ENCODE measurements at regions of chr7 and their contacts with region 1.

Region 1: DNA sequence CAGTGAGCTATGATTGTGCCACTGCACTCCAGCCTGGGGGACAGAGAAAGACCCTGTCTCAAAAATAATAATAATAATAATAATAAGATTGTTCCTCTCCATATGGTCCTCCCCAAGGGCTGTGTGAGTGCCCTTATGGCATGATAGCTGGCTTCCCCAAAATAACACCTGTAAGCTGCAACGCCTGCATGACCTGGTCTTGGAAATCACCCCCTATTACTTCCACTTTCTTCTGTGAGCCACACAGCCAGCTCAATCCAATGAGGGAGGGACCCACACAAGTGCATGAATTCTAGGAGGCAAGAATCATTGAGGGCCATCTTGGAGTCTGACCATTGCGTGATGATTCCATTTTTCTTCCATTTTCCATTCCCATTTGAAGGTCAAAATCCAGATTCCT is 82.7 kb upstream of the CALN1 start:
- DNase-seq: no peak
- H3K4me3 ChIP-seq: no peak overlapping the region
- H3K27ac ChIP-seq: no peak overlapping the region
- H3K4me1 ChIP-seq: no peaks in the 10 kb centered on the region
- H3K27me3 ChIP-seq: peaks cover 0 to 10% (median 0%) of the 10 kb centered on the region in 7 donors
- CTCF ChIP-seq: no peak
- POLR2A ChIP-seq: no peak

Region 2: DNA sequence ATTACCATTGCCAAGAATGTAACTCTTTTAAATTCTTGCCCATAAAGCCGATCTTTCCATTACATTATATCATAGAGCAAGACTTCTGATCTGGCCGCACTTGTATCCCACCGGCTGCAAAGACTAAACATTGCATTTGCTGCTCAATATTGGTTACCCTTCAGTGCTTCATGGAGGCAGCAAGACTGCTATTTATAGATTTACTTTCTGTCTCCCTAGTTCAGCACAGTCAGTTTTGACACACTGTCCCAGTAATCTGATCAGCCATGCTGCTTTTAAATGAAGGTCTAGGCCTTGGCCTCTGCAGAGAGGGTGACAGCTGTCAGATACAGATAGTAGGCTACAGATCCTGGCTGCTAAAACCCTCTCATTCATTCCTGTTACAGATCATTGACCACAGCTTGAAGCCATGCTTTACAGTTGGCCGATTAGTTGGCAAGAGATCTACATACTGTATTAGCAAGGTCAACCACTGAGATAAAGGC is 1925.4 kb before region 1 on chr7:
- intact Hi-C with region 1: no loop called
- DNase-seq: no peak
- H3K4me3 ChIP-seq: no peak overlapping the region
- H3K27ac ChIP-seq: peak overlapping the region in 5 of 8 donors; percentile 3 to 58 (median 34)
- H3K4me1 ChIP-seq: peaks cover 0 to 12% (median 0%) of the 10 kb centered on the region in 6 donors
- H3K27me3 ChIP-seq: no peaks in the 10 kb centered on the region
- CTCF ChIP-seq: no peak
- POLR2A ChIP-seq: no peak

Region 3: DNA sequence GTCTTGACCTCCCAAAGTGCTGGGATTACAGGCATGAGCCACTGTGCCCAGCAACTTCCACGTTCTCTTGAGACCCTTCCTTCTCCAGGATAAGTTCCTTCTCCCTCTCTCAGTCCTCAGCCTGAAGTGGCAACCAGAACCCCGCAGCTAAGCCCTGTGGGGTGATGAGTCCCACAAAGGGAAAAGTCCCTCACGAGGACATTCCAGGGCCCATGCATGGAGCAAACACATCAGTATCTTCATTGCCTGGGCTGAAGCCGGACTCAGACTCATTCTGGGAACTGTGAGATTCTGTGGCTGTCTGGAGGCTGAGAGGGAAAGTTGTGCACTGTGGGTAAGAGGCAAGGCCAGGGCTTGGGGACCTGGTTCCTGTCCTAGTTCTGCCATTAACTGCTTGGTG is 740.0 kb before region 1 on chr7:
- intact Hi-C with region 1: loop called (anchors 5 kb)
- DNase-seq: no peak
- H3K4me3 ChIP-seq: no peak overlapping the region
- H3K27ac ChIP-seq: no peak overlapping the region
- H3K4me1 ChIP-seq: peaks cover 0 to 6% (median 6%) of the 10 kb centered on the region in 6 donors
- H3K27me3 ChIP-seq: peaks cover 0 to 49% (median 11%) of the 10 kb centered on the region in 7 donors
- CTCF ChIP-seq: no peak
- POLR2A ChIP-seq: no peak